Gastrocnemius medialis (tissue), 4 donors: ENCODE measurements at regions of chr2 and their contacts with region 1.

Region 1: GRCh38 chr2:219278655-219279516 is at the start of gene DNAJB2:
- DNase-seq: peak; percentile 98
- ATAC-seq: peak; percentile 80 to 84
- H3K4me3 ChIP-seq: peak within 1 kb of the TSS; percentile 57 to 87 (median 76)
- H3K27ac ChIP-seq: peak within 1 kb of the TSS; percentile 92 to 98 (median 96)
- H3K4me1 ChIP-seq: peaks cover 30 to 33% of the 10 kb centered on the region in 2 donors
- H3K27me3 ChIP-seq: no peaks in the 10 kb centered on the region
- CTCF ChIP-seq: no peak
- POLR2A ChIP-seq: peak; percentile 94 to 96
- total RNA-seq, gene DNAJB2: 58.6 to 76.5 (median 71.8) TPM

Region 2: GRCh38 chr2:219155054-219155644 is 123.7 kb before region 1 on chr2:
- in situ Hi-C with region 1: loop called in 2 of 4 experiments (anchors 10 to 25 kb)
- intact Hi-C with region 1: loop called (anchors 1 kb)
- DNase-seq: no peak
- ATAC-seq: peak; percentile 41 to 66
- H3K4me3 ChIP-seq: no peak overlapping the region
- H3K27ac ChIP-seq: no peak overlapping the region
- H3K4me1 ChIP-seq: peaks cover 5 to 6% of the 10 kb centered on the region in 2 donors
- H3K27me3 ChIP-seq: no peaks in the 10 kb centered on the region
- CTCF ChIP-seq: peak; percentile 34 to 69 (median 60)
- POLR2A ChIP-seq: no peak

Region 3: DNA sequence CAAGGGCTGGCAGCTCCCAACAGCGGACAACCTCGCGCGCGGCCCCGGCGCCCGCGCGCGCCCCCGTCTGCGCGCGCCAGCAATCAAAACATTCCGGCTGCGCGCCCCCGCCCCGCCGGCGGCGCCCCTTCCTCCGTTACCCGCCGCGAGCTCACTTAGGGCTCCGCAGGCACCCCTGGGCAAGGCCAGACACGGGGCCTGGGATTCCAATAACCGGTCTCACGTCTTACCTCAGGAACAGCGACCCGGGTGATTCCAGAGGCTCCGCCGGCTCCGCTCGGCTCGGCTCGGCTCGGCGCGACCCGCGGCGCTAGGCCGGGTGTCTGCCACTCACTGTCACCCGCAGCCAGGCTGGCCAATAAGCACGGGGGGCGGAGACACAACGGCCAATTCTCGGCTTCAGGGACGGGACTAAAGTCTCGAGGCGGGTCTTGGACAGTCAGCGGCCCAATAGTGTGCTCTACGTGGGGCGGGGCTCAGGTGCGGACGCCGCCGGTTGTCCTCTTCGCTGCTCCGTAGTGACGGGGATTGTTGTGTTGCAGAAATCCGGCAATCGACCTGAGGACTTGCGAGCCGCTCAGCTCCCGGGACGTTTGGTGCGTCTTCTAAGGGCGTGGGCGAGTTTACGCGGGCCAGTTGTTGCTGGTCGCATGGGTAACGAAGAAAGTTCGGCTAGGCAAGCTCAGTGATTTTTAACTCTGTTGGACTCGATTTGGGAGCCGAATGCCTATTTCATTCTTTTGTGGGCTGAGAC is 49.4 kb before region 1 on chr2 and contains the starts of genes ANKZF1 and ATG9A:
- in situ Hi-C with region 1: no loop called
- intact Hi-C with region 1: loop called (anchors 1 kb)
- DNase-seq: peak; percentile 99 to 100
- ATAC-seq: peak; percentile 96 to 98
- H3K4me3 ChIP-seq: peak within 1 kb of the TSS; percentile 73 to 95 (median 90)
- H3K27ac ChIP-seq: peak within 1 kb of the TSS; percentile 85 to 99 (median 90)
- H3K4me1 ChIP-seq: peaks cover 22 to 27% of the 10 kb centered on the region in 2 donors
- H3K27me3 ChIP-seq: no peaks in the 10 kb centered on the region
- CTCF ChIP-seq: peak in 1 of 5 experiments; percentile 17
- POLR2A ChIP-seq: peak; percentile 93 to 95
- total RNA-seq, gene ANKZF1: 13.0 to 23.0 (median 19.1) TPM
- total RNA-seq, gene ATG9A: 111 to 208 (median 176) TPM

Region 4: GRCh38 chr2:219294356-219295351 is 15.8 kb after region 1 on chr2:
- in situ Hi-C with region 1: no loop called
- intact Hi-C with region 1: loop called (anchors 1 kb)
- DNase-seq: peak; percentile 64 to 80
- ATAC-seq: peak; percentile 85 to 86
- H3K4me3 ChIP-seq: peak overlapping the region; percentile 57 to 63 (median 58)
- H3K27ac ChIP-seq: peak overlapping the region; percentile 68 to 82 (median 77)
- H3K4me1 ChIP-seq: peaks cover 8 to 10% of the 10 kb centered on the region in 2 donors
- H3K27me3 ChIP-seq: no peaks in the 10 kb centered on the region
- CTCF ChIP-seq: peak; percentile 95 to 99 (median 98)
- POLR2A ChIP-seq: peak in 1 of 2 donors; percentile 30

Region 5: DNA sequence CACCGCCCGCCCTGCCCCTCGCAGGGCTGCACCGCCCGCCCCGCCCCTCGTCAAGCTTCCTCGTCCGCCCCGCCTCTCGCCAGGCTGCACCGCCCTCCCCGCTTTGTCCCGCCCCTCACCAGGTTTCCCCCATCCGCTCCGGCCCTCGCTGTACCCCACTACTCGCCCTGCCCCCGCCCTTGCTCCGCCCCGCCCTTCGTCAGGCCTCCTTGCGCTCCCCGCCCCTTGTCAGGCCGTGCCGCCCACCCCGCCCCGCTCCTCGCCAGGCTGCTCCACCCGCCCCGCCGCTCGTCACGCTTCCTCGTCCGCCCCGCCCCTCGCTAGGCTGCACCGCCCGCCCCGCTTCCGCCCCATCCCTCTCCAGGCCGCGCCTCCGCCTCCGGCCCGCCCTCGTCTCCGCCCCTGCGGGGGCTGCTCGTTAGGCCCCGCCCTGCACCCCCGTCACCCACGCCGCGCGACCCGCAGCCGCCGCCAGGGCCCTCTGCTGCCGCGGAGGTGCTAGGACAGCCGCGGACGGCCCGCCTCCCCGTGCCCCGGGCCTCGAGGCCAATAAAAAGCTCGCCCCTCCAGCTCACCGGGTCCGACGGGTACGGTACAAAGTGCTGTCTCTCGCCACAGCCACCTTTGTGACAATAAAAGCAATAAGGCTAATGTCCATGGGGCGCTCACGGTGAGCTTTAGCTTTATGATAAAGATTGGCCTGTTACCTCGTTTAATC is 109.4 kb after region 1 on chr2:
- in situ Hi-C with region 1: no loop called
- intact Hi-C with region 1: loop called (anchors 5 kb)
- DNase-seq: peak; percentile 96
- ATAC-seq: peak; percentile 68 to 73
- H3K4me3 ChIP-seq: peak overlapping the region; percentile 49 to 87 (median 53)
- H3K27ac ChIP-seq: peak overlapping the region; percentile 91 to 96 (median 93)
- H3K4me1 ChIP-seq: peaks cover 9 to 13% of the 10 kb centered on the region in 2 donors
- H3K27me3 ChIP-seq: no peaks in the 10 kb centered on the region
- CTCF ChIP-seq: peak; percentile 59 to 81 (median 77)
- POLR2A ChIP-seq: no peak